CD8-positive, alpha-beta T cell (primary cell): ENCODE measurements at regions of chr9 and their contacts with region 1.

Region 1: GRCh38 chr9:100498592-100498991 is 25.6 kb downstream of the TMEFF1 start:
- DNase-seq: no peak
- ATAC-seq: no peak
- H3K4me3 ChIP-seq: no peak overlapping the region
- H3K4me3 Mint-ChIP-seq: no peak overlapping the region
- H3K27ac ChIP-seq: no peak overlapping the region
- H3K27ac Mint-ChIP-seq: no peak overlapping the region
- H3K4me1 ChIP-seq: no peaks in the 10 kb centered on the region
- H3K4me1 Mint-ChIP-seq: no peaks in the 10 kb centered on the region
- H3K27me3 ChIP-seq: no peaks in the 10 kb centered on the region
- H3K27me3 Mint-ChIP-seq: no peaks in the 10 kb centered on the region
- CTCF ChIP-seq: no peak

Region 2: GRCh38 chr9:100525563-100525962 is 27.0 kb after region 1 on chr9:
- CTCF ChIA-PET with region 1: no interaction called
- POLR2A ChIA-PET with region 1: no interaction called
- intact Hi-C with region 1: loop called in 1 of 2 experiments (anchors 2 kb)
- DNase-seq: no peak
- ATAC-seq: no peak
- H3K4me3 ChIP-seq: no peak overlapping the region
- H3K4me3 Mint-ChIP-seq: no peak overlapping the region
- H3K27ac ChIP-seq: no peak overlapping the region
- H3K27ac Mint-ChIP-seq: no peak overlapping the region
- H3K4me1 ChIP-seq: no peaks in the 10 kb centered on the region
- H3K4me1 Mint-ChIP-seq: no peaks in the 10 kb centered on the region
- H3K27me3 ChIP-seq: no peaks in the 10 kb centered on the region
- H3K27me3 Mint-ChIP-seq: peaks cover 5% of the 10 kb centered on the region
- CTCF ChIP-seq: no peak